Gastrocnemius medialis (tissue), 4 donors: ENCODE measurements at regions of chr6 and their contacts with region 1.

Region 1: DNA sequence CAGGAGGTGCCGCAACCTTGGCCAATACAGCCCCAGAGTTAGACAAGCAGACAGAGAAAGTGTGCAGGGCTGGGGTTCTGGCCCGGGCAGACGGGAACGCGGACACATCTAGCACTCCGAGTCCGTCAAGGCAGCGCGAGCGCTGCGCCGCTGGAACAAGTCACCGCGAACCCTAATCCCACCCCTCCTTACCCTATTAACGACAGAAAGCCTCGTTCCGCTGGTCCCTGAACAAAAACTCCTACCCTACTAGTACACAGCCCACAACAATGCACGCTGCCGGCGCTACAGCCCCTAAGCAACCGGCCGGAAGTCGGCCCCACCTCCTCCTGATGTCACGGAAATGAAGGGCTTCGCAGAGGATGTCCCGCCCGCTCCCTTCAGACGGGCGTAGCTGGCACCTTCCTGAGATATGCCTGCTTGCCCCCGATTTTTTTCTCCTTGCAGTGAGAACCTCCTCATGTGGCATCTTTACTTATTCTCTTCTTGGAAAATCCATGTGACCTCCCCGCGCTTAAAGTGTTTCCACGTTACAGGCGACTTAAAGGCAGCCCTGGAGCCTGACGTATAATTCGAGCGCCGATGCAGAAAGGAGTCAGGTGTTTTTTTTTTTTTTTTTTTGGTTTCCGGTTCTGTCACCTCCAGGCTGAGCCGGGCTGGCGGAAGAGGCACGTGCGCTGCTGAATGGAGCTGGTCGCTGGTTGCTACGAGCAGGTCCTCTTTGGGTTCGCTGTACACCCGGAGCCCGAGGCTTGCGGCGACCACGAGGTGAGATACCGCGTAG is at the starts of genes C6orf52 and PAK1IP1:
- DNase-seq: peak; percentile 88 to 91
- ATAC-seq: peak; percentile 99
- H3K4me3 ChIP-seq: peak within 1 kb of the TSS; percentile 71 to 96 (median 92)
- H3K27ac ChIP-seq: peak within 1 kb of the TSS; percentile 92 to 98 (median 93)
- H3K4me1 ChIP-seq: peaks cover 26 to 30% of the 10 kb centered on the region in 2 donors
- H3K27me3 ChIP-seq: no peaks in the 10 kb centered on the region
- CTCF ChIP-seq: no peak
- POLR2A ChIP-seq: peak; percentile 80 to 84
- total RNA-seq, gene C6orf52: 2.8 TPM in 1 of 4 donors, not detected in the others
- total RNA-seq, gene PAK1IP1: 5.5 to 18.8 (median 14.2) TPM

Region 2: DNA sequence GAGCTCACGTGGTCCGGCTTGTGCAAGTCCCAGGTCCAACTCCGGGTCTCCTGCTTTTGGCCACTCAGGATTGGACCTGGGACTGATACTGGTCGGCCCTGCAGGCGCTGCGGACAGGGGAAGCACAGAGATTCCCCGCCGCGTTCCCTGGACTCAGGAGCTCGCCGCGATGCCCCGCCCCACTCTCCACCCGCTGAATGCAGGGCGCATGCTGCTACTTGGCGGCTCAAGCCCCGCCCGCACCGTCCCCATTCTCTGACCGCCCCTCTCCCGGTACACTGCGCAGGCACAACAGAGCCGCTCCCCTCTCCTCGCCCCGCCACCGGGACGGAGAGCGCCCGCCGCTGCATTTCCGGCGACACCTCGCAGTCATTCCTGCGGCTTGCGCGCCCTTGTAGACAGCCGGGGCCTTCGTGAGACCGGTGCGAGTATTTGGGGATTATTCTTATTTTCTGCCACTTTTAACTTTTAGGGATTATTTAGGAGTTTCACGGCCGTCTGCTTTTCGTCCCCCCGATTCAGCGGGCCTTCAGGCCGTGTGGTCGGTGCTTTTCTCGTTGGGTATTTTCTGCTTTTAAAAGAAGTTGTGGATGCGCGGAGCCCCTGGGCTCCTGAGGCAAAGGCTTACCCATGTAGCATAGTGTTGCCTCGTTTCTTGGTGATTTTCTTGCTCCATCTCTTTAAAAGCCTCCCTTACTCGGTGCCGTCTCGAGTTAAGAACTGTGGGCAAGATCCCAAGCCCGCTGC is 28.5 kb after region 1 on chr6 and contains the start of gene TMEM14C:
- in situ Hi-C with region 1: no loop called
- intact Hi-C with region 1: loop called (anchors 1 kb)
- DNase-seq: peak; percentile 99
- ATAC-seq: peak; percentile 94 to 95
- H3K4me3 ChIP-seq: peak within 1 kb of the TSS; percentile 64 to 80 (median 74)
- H3K27ac ChIP-seq: peak within 1 kb of the TSS; percentile 87 to 96 (median 90)
- H3K4me1 ChIP-seq: peaks cover 26% of the 10 kb centered on the region in 2 donors
- H3K27me3 ChIP-seq: no peaks in the 10 kb centered on the region
- CTCF ChIP-seq: no peak
- POLR2A ChIP-seq: peak; percentile 72 to 79
- total RNA-seq, gene TMEM14C: 93.2 to 130 (median 117) TPM

Region 3: GRCh38 chr6:10747251-10747972 is 52.9 kb after region 1 on chr6 and contains the start of gene TMEM14B:
- in situ Hi-C with region 1: loop called in 1 of 4 experiments (anchors 10 kb)
- intact Hi-C with region 1: loop called (anchors 1 kb)
- DNase-seq: peak; percentile 99
- ATAC-seq: peak; percentile 97
- H3K4me3 ChIP-seq: peak within 1 kb of the TSS; percentile 69 to 91 (median 74)
- H3K27ac ChIP-seq: peak within 1 kb of the TSS; percentile 78 to 95 (median 86)
- H3K4me1 ChIP-seq: peaks cover 22 to 26% of the 10 kb centered on the region in 2 donors
- H3K27me3 ChIP-seq: no peaks in the 10 kb centered on the region
- CTCF ChIP-seq: no peak
- POLR2A ChIP-seq: peak; percentile 68 to 72
- total RNA-seq, gene TMEM14B: 68.3 to 93.8 (median 79.4) TPM

Region 4: DNA sequence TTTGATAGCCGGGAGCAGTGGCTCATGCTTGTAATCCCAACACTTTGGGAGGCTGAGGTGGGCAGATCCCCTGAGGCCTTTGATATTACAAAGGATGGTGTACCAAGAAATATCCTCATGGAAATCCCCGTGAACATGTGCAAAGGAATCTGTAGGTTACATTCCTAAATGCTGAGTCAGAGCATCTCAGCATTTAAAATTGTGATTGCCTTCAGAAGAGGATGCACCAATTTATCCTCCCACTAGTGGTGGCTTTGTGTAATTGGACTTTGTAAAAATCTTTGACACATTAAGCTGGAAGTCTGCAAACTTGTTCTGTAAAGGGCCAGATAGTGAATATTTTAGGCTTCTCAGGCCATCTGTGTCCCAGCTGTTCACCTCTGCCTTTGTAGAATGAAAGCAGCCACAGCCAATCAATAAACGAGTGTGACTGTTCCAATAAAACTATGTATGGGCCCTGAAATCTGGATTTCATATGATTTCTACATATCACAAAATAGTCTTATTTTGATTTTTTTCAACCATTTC is 64.9 kb after region 1 on chr6:
- in situ Hi-C with region 1: no loop called
- intact Hi-C with region 1: no loop called
- DNase-seq: no peak
- ATAC-seq: no peak
- H3K4me3 ChIP-seq: no peak overlapping the region
- H3K27ac ChIP-seq: peak overlapping the region in 1 of 4 donors; percentile 2
- H3K4me1 ChIP-seq: peaks cover 0 to 4% of the 10 kb centered on the region in 2 donors
- H3K27me3 ChIP-seq: no peaks in the 10 kb centered on the region
- CTCF ChIP-seq: peak in 2 of 5 experiments; percentile 10 to 13
- POLR2A ChIP-seq: no peak

Region 5: DNA sequence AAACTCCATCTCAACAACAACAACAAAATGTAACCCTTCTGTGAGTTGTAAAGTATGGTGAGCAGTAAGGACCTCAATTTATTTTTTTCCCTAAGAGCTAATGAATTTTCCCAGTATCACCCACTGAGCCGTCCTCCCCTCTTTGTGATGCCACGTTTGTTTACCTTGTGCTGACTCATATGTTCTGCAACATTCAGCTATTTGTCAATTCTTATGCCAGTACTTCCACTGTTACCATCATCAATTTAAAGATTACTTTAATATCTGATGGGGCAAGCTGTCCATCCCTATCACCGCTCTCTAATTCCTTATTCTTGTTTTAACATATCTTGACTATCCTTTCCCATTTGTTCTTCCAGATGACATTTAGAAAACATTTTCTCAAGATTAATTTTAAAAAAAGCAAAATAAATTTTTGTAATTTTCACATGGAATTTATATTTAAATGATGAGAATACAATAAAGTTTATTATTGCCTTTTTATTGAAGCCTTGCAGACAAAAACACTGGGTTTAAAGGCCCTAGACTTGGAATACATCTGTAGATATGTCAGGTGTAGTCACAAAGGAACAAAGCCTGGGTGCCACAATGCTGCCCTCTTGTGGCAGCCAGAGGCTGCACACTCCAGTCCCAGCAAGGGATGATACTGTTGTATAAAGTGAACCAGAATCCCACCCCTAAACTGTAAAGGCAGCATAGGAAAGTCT is 106.5 kb after region 1 on chr6:
- in situ Hi-C with region 1: no loop called
- intact Hi-C with region 1: loop called (anchors 5 kb)
- DNase-seq: peak in 1 of 2 donors; percentile 28
- ATAC-seq: peak in 1 of 2 donors; percentile 76
- H3K4me3 ChIP-seq: no peak overlapping the region
- H3K27ac ChIP-seq: no peak overlapping the region
- H3K4me1 ChIP-seq: no peaks in the 10 kb centered on the region
- H3K27me3 ChIP-seq: no peaks in the 10 kb centered on the region
- CTCF ChIP-seq: peak; percentile 70 to 98 (median 81)
- POLR2A ChIP-seq: no peak

Region 6: GRCh38 chr6:11093589-11094410 is 399.3 kb after region 1 on chr6 and contains the start of gene SMIM13:
- in situ Hi-C with region 1: no loop called
- intact Hi-C with region 1: loop called (anchors 1 kb)
- DNase-seq: peak; percentile 97
- ATAC-seq: peak; percentile 94 to 98
- H3K4me3 ChIP-seq: peak within 1 kb of the TSS; percentile 78 to 91 (median 86)
- H3K27ac ChIP-seq: peak within 1 kb of the TSS; percentile 94 to 97 (median 95)
- H3K4me1 ChIP-seq: peaks cover 16 to 18% of the 10 kb centered on the region in 2 donors
- H3K27me3 ChIP-seq: no peaks in the 10 kb centered on the region
- CTCF ChIP-seq: peak; percentile 51 to 89 (median 70)
- POLR2A ChIP-seq: peak; percentile 71 to 81
- total RNA-seq, gene SMIM13: 9.9 to 12.8 (median 12.3) TPM